Activated naive CD4-positive, alpha-beta T cell treated with anti-CD3 and anti-CD28 coated beads for 36 hours (primary cell): ENCODE measurements at regions of chrX and their contacts with region 1.

Region 1: GRCh38 chrX:23782863-23783568 is at the start of gene SAT1:
- DNase-seq: peak; percentile 96
- H3K4me3 Mint-ChIP-seq: peak within 1 kb of the TSS; percentile 84
- H3K27ac Mint-ChIP-seq: peak within 1 kb of the TSS; percentile 95
- H3K4me1 Mint-ChIP-seq: peaks cover 29% of the 10 kb centered on the region
- H3K27me3 Mint-ChIP-seq: no peaks in the 10 kb centered on the region
- total RNA-seq, gene SAT1: 629 to 649 TPM

Region 2: GRCh38 chrX:23570674-23571343 is 212.2 kb before region 1 on chrX:
- CTCF ChIA-PET with region 1: no interaction called
- intact Hi-C with region 1: no loop called
- DNase-seq: no peak
- H3K4me3 Mint-ChIP-seq: no peak overlapping the region
- H3K27ac Mint-ChIP-seq: no peak overlapping the region
- H3K4me1 Mint-ChIP-seq: no peaks in the 10 kb centered on the region
- H3K27me3 Mint-ChIP-seq: peaks cover 5% of the 10 kb centered on the region

Region 3: GRCh38 chrX:23656684-23657083 is 126.3 kb before region 1 on chrX:
- CTCF ChIA-PET with region 1: no interaction called
- intact Hi-C with region 1: no loop called
- DNase-seq: no peak
- H3K4me3 Mint-ChIP-seq: no peak overlapping the region
- H3K27ac Mint-ChIP-seq: no peak overlapping the region
- H3K4me1 Mint-ChIP-seq: peaks cover 16% of the 10 kb centered on the region
- H3K27me3 Mint-ChIP-seq: no peaks in the 10 kb centered on the region

Region 4: DNA sequence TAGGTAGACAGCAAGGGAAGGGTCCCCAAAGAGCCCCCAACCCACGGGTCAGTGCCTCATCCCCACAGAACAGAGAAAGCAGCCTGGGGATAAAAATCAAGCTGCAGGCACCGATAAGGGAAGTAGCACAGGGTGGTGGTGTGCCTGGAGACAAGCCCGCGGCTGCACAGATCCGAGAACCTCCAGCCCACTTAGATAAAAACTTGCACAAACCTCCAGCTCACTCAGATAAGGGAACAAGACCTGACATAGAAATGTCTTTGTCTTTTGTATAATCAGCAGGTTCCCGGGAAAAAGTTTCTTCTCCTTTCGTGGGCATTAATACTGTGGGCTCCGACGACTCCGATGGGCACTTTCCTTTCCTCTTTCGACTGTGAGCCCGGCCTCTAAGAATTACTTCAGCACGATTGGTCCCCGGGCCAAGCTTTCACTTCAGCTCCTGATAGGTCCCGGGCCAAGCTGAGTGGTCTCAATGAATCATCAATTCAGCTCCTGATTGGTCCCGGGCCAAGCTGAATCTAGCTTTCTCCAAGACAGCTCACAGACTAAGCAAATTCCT is 83.3 kb before region 1 on chrX:
- CTCF ChIA-PET with region 1: interaction called, 4 read pairs
- intact Hi-C with region 1: loop called (anchors 1 kb)
- DNase-seq: peak; percentile 28
- H3K4me3 Mint-ChIP-seq: peak overlapping the region; percentile 53
- H3K27ac Mint-ChIP-seq: no peak overlapping the region
- H3K4me1 Mint-ChIP-seq: peaks cover 6% of the 10 kb centered on the region
- H3K27me3 Mint-ChIP-seq: no peaks in the 10 kb centered on the region

Region 5: GRCh38 chrX:23797371-23798128 is 14.5 kb after region 1 on chrX:
- CTCF ChIA-PET with region 1: no interaction called
- intact Hi-C with region 1: loop called (anchors 1 kb)
- DNase-seq: no peak
- H3K4me3 Mint-ChIP-seq: no peak overlapping the region
- H3K27ac Mint-ChIP-seq: peak overlapping the region; percentile 51
- H3K4me1 Mint-ChIP-seq: peaks cover 11% of the 10 kb centered on the region
- H3K27me3 Mint-ChIP-seq: no peaks in the 10 kb centered on the region

Region 6: GRCh38 chrX:23959781-23960180 is 176.8 kb after region 1 on chrX:
- CTCF ChIA-PET with region 1: no interaction called
- intact Hi-C with region 1: loop called (anchors 1 kb)
- DNase-seq: peak; percentile 58
- H3K4me3 Mint-ChIP-seq: peak overlapping the region; percentile 26
- H3K27ac Mint-ChIP-seq: peak overlapping the region; percentile 83
- H3K4me1 Mint-ChIP-seq: peaks cover 12% of the 10 kb centered on the region
- H3K27me3 Mint-ChIP-seq: no peaks in the 10 kb centered on the region

Region 7: DNA sequence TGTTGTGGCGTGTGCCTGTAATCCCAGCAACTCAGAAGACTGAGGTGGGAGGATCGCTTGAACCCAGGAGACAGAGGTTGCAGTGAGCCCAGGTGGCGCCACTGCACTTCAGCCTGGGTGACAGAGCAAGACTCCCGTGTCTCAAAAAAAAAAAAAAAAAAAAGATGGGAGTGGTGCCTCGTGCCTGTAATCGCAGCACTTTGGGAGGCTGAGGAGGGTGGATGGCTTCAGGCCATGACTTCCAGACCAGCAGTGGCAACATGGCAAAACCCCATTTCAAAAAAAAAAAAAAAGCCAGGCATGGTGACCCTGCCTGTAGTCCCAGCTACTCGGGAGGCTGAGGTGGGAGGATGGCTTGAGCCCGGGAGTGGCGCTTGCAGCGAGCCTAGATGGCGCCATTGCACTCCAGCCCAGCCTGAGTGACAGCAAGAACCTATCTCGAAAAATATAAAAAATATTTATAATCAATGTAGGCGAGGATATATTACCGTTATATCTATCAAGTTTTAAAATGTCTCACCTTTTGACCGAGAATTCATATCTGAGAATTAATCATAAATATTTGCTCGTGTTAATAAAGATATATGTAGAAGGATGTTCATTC is 298.7 kb after region 1 on chrX:
- CTCF ChIA-PET with region 1: no interaction called
- intact Hi-C with region 1: loop called (anchors 1 kb)
- DNase-seq: peak; percentile 73
- H3K4me3 Mint-ChIP-seq: peak overlapping the region; percentile 29
- H3K27ac Mint-ChIP-seq: no peak overlapping the region
- H3K4me1 Mint-ChIP-seq: peaks cover 33% of the 10 kb centered on the region
- H3K27me3 Mint-ChIP-seq: no peaks in the 10 kb centered on the region

Region 8: GRCh38 chrX:24184018-24184417 is 401.0 kb after region 1 on chrX:
- CTCF ChIA-PET with region 1: no interaction called
- intact Hi-C with region 1: no loop called
- DNase-seq: no peak
- H3K4me3 Mint-ChIP-seq: no peak overlapping the region
- H3K27ac Mint-ChIP-seq: no peak overlapping the region
- H3K4me1 Mint-ChIP-seq: peaks cover 20% of the 10 kb centered on the region
- H3K27me3 Mint-ChIP-seq: no peaks in the 10 kb centered on the region

Region 9: DNA sequence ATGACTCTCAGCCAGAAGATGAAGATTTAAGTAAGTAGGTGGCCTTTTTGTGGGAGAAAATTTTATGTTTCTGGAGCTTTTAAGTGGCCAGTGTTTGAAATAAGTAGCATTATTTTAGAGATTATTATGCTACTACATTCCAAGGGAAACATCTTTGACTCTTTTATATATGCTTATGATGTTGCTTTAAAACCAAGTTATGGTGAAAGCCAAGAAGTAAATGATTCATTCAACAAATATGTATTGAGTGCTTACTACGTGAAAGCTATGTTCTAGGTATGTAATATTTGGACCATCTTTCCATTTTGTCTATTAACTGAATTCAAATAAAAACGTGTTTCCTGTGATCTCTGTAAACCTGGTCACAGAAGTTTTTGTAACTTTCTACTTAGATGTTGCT is 424.8 kb after region 1 on chrX:
- CTCF ChIA-PET with region 1: no interaction called
- intact Hi-C with region 1: no loop called
- DNase-seq: no peak
- H3K4me3 Mint-ChIP-seq: no peak overlapping the region
- H3K27ac Mint-ChIP-seq: no peak overlapping the region
- H3K4me1 Mint-ChIP-seq: peaks cover 14% of the 10 kb centered on the region
- H3K27me3 Mint-ChIP-seq: no peaks in the 10 kb centered on the region

Region 10: DNA sequence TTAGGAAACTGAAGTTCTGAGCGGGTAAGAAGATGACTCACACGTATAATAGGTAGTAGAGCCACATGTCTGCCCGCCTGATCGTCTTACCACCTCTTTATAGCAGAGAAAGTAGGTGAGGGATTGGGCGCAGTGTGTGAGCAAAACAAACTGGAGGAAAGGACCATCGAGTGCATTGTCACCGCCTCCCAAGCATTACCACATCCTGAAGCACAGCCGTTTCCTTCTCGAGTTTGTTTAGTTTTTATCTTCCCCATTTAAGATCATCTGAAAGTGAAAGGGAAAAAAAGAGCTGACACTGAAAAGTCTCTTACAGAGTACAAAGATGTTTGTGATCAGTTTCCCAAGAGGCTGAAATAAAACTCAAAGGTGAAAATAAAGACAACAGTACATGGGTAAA is 696.9 kb after region 1 on chrX:
- CTCF ChIA-PET with region 1: no interaction called
- intact Hi-C with region 1: loop called (anchors 5 kb)
- DNase-seq: peak; percentile 86
- H3K4me3 Mint-ChIP-seq: peak overlapping the region; percentile 69
- H3K27ac Mint-ChIP-seq: peak overlapping the region; percentile 96
- H3K4me1 Mint-ChIP-seq: peaks cover 69% of the 10 kb centered on the region
- H3K27me3 Mint-ChIP-seq: no peaks in the 10 kb centered on the region